ENCODE measurements at regions of chr10 and their contacts with region 1.

Region 1: DNA sequence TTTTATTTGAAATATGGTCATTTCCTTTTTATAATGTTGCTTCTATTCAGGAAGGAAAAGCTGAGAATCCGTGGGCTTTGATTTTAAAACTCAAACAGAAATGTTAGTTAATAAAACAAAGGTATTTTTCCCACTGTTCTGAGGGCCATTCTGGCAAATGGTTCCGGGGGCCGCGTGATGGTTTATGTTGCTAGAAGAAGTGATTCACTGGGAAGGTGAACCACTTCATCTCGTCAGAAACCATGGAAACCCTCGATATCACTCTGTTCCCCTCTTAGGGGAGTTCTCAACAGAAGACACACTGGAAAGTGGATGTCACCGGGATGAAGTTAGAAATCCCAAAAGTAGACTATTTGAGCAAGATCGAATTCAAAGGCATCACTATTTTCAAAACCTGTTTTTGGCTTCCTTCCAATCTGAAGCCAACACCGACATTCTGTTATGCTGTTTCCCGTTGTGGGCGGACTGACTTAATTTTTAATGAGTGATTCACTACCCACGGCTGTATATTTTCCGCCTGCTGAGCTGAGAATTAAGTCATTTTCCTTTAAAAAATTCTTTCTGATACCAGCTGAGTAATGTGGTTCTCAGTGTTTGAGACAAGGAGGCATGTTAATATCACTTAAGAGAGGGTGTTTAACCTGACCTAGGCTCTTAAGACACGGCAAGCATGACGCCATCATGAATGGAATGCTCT is 84.1 kb downstream of the PTPRE start:
- DNase-seq: no peak
- H3K4me3 ChIP-seq: no peak overlapping the region
- H3K27ac ChIP-seq: peak overlapping the region; percentile 46 to 67 (median 64)
- H3K4me1 ChIP-seq: peaks cover 0 to 31% (median 3%) of the 10 kb centered on the region in 4 donors
- H3K27me3 ChIP-seq: no peaks in the 10 kb centered on the region
- CTCF ChIP-seq: no peak
- EP300 ChIP-seq: no peak
- POLR2A ChIP-seq: no peak

Region 2: GRCh38 chr10:127919418-127920271 is 71.3 kb before region 1 on chr10:
- in situ Hi-C with region 1: loop called in 1 of 4 experiments (anchors 10 kb)
- intact Hi-C with region 1: no loop called
- DNase-seq: no peak
- H3K4me3 ChIP-seq: no peak overlapping the region
- H3K27ac ChIP-seq: peak overlapping the region; percentile 24 to 63 (median 42)
- H3K4me1 ChIP-seq: peaks cover 0 to 32% (median 0%) of the 10 kb centered on the region in 4 donors
- H3K27me3 ChIP-seq: no peaks in the 10 kb centered on the region
- CTCF ChIP-seq: peak in 2 of 5 experiments; percentile 7 to 10
- EP300 ChIP-seq: no peak
- POLR2A ChIP-seq: no peak

Region 3: GRCh38 chr10:128011175-128011979 is 20.4 kb after region 1 on chr10:
- in situ Hi-C with region 1: no loop called
- intact Hi-C with region 1: no loop called
- DNase-seq: peak; percentile 86
- H3K4me3 ChIP-seq: no peak overlapping the region
- H3K27ac ChIP-seq: no peak overlapping the region
- H3K4me1 ChIP-seq: peaks cover 0 to 14% (median 2%) of the 10 kb centered on the region in 4 donors
- H3K27me3 ChIP-seq: no peaks in the 10 kb centered on the region
- CTCF ChIP-seq: peak; percentile 95 to 99 (median 97)
- EP300 ChIP-seq: no peak
- POLR2A ChIP-seq: no peak